Spleen (tissue), 13 donors: ENCODE measurements at regions of chr14 and their contacts with region 1.

Region 1: DNA sequence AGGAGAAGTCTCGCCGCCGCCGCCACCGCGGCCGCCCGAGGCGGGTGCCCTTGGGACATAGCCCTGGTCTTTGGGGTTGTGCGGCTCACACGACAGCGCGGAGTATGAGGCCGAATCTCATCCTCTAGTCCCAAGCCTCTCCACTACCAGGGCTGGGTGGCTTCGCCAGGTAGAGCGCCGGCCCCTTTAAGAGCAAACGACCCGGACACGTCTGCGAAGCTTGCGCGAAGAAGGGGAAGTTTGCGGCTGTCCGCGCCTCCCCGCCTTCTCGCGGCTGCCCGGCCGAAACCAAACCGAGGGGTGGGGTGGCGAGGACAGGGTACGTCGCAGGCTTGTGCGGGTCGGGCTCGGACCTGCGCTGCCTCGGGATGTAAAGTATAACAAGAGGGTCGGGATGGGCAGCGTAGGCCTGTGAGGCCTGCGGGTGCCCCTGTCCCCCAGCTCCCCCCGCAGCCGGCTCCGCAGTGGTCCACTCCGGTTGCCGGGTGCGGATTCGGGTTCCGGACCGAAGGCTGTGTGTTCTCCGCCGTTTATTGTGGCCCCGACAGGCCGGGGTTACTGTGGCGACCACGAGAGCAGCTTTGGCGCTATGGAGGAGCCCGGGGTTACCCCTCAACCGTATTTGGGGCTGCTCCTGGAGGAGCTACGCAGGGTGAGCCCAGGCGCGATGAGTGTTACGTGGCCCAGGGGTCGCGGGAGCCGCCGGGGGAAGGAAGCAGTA is 33.3 kb downstream of the MIA2 start:
- DNase-seq: peak; percentile 97
- H3K4me3 ChIP-seq: peak overlapping the region; percentile 66 to 93 (median 84)
- H3K27ac ChIP-seq: peak overlapping the region; percentile 98 to 99 (median 99)
- H3K4me1 ChIP-seq: peaks cover 25 to 59% (median 41%) of the 10 kb centered on the region in 6 donors
- H3K27me3 ChIP-seq: no peaks in the 10 kb centered on the region
- CTCF ChIP-seq: peak in 1 of 11 experiments; percentile 11
- POLR2A ChIP-seq: peak in 1 of 3 donors; percentile 82

Region 2: DNA sequence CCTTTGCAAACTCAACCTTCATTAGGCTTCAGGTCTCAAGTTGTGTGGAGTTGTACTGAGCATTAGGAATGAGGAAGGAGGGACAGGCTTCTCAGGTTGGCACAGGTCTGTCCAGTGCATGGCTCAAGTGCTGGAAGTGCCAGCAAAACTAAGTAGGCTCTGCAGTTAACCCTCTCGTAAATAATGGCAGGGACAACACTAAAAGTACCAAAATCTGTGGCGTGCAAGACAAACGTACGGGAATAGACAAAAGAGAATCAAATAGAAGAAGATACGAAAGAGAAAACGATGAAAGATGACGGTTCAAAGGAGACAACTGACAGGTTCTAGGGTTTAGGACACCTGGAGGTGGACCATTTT is 97.5 kb before region 1 on chr14:
- intact Hi-C with region 1: loop called (anchors 10 kb)
- DNase-seq: no peak
- H3K4me3 ChIP-seq: peak overlapping the region; percentile 57 to 83 (median 78)
- H3K27ac ChIP-seq: peak overlapping the region; percentile 94 to 99 (median 98)
- H3K4me1 ChIP-seq: peaks cover 24 to 70% (median 42%) of the 10 kb centered on the region in 6 donors
- H3K27me3 ChIP-seq: no peaks in the 10 kb centered on the region
- CTCF ChIP-seq: no peak
- POLR2A ChIP-seq: no peak